ENCODE measurements at regions of chr20 and their contacts with region 1.

Region 1: DNA sequence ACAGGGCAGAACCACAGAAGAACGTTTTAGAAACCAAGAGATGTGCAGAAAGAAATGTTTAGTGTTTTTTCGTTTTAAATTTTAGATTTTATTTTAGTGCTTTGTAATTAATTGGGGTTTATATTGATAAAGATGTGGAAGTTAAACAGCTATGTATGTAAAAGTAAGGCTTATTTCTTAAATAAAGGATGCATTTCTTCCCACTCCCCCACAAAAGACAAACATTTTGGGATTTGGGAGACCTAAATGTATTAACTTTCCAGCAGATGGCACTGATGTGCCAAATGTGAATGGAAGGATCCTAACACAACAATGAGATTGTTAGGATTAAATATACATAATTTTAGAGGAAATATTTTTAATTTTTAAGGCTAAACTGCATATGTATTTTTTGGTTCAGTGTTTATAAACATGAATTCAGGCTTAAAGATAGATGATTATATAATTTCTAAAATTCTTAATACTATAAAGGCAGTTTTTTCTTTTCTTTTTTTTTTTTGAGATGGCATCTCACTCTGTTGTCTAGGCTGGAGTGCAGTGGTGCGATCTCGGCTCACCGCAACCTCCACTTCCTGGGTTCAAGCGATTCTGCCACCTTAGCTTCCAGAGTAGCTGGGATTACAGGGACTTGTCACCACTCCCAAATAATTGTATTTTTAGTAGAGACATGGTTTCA is 12.0 kb downstream of the PFDN4 start:
- ATAC-seq: peak in 2 of 8 experiments; percentile 20 to 68
- H3K4me3 ChIP-seq: no peak overlapping the region
- H3K27ac ChIP-seq: no peak overlapping the region
- H3K4me1 ChIP-seq: no peaks in the 10 kb centered on the region

Region 2: GRCh38 chr20:54633374-54634355 is 413.8 kb after region 1 on chr20:
- in situ Hi-C with region 1: loop called in 6 of 9 experiments (anchors 10 to 25 kb)
- ATAC-seq: peak in 3 of 8 experiments; percentile 23 to 35 (median 26)
- H3K4me3 ChIP-seq: no peak overlapping the region
- H3K27ac ChIP-seq: no peak overlapping the region
- H3K4me1 ChIP-seq: peaks cover 0 to 5% of the 10 kb centered on the region in 2 donors

Measured in motor neuron (in vitro differentiated cells).